ENCODE measurements at regions of chr17 and their contacts with region 1.

Region 1: GRCh38 chr17:42609182-42609813 is at the starts of genes RETREG3 and TUBG1:
- DNase-seq: peak; percentile 99
- ATAC-seq: peak; percentile 94
- H3K4me3 Mint-ChIP-seq: peak within 1 kb of the TSS; percentile 100
- H3K27ac Mint-ChIP-seq: peak within 1 kb of the TSS; percentile 97
- H3K4me1 Mint-ChIP-seq: peaks cover 17% of the 10 kb centered on the region
- H3K27me3 Mint-ChIP-seq: no peaks in the 10 kb centered on the region
- CTCF ChIP-seq: no peak
- total RNA-seq, gene RETREG3: 39.8 to 43.2 TPM (median 40.4 TPM) in 3 replicates
- total RNA-seq, gene TUBG1: 130 to 141 TPM (median 140 TPM) in 3 replicates

Region 2: DNA sequence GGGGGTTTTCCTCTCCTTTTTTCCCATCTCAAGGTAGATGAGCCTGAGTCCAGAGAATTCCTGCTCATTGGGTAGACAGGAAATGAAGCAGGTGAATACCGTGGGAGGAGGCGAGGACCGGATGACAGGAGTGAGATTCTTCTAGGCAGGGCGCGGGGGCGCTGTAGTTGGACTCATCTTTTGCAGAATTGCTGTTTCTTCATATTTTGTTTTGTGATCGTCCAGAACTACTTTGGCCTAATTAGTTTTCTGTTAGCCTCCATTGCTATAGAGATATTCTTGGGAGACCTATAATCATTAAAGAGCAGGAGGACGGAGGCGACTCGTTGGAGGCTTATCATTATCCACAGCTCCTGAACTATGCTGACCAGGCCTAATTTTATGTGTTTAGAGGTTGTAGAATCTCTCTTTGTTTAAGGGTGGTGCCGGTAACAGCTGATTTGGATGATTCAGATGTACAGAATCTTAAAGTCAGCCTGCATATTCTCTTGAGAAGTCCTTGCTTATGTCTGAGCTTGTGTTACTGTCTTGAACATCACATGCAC is 150.0 kb before region 1 on chr17:
- CTCF ChIA-PET with region 1: no interaction called
- POLR2A ChIA-PET with region 1: no interaction called
- DNase-seq: peak; percentile 31
- ATAC-seq: peak; percentile 59
- H3K4me3 Mint-ChIP-seq: peak overlapping the region; percentile 93
- H3K27ac Mint-ChIP-seq: peak overlapping the region; percentile 97
- H3K4me1 Mint-ChIP-seq: peaks cover 34% of the 10 kb centered on the region
- H3K27me3 Mint-ChIP-seq: no peaks in the 10 kb centered on the region; the same call in 1 of the 2 replicates
- CTCF ChIP-seq: no peak

Region 3: DNA sequence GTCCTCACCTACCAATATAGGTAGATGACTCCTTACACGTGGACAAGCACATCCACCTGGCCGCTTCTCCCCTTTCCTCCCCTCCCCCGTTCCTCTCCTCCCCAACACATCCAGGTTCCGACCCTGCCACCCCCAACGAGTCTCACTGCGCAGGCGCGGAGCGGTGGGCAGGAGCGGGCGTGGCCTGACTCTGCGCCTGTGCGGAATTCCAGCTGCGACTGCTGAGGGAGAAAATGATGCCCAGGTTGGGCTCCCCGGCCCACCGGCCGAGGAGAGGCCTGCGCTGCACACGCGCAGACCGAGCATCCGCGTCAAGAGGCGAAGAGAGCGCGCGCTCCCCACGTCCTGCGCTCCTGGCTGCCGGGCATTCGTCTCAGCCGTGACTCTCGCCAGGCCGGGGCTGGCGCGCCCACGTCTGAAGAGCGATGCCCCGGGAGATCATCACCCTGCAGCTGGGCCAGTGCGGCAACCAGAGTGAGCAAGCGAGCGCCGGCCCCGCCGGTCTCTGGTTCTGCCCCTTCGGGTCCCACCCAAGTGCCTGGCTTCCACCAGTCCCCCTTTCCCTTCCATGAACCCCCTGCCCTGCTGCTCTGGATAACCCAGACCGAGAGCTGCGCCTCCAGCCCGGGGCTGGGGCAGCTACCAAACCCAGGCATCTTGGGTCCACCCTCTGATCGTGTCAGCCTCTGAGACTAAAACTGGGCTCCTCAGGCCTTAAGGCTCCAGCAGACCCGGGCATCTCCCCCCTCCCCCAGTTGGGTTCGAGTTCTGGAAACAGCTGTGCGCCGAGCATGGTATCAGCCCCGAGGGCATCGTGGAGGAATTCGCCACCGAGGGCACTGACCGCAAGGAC is 50.0 kb after region 1 on chr17 and contains the start of gene TUBG2:
- CTCF ChIA-PET with region 1: interaction called, 14 read pairs
- POLR2A ChIA-PET with region 1: interaction called, 3 read pairs
- DNase-seq: peak; percentile 96
- ATAC-seq: peak; percentile 88
- H3K4me3 Mint-ChIP-seq: peak within 1 kb of the TSS; percentile 85
- H3K27ac Mint-ChIP-seq: peak within 1 kb of the TSS; percentile 57
- H3K4me1 Mint-ChIP-seq: peaks cover 11% of the 10 kb centered on the region
- H3K27me3 Mint-ChIP-seq: peaks cover 3% of the 10 kb centered on the region
- CTCF ChIP-seq: no peak
- total RNA-seq, gene TUBG2: 22.1 to 26.7 TPM (median 22.2 TPM) in 3 replicates

Region 4: DNA sequence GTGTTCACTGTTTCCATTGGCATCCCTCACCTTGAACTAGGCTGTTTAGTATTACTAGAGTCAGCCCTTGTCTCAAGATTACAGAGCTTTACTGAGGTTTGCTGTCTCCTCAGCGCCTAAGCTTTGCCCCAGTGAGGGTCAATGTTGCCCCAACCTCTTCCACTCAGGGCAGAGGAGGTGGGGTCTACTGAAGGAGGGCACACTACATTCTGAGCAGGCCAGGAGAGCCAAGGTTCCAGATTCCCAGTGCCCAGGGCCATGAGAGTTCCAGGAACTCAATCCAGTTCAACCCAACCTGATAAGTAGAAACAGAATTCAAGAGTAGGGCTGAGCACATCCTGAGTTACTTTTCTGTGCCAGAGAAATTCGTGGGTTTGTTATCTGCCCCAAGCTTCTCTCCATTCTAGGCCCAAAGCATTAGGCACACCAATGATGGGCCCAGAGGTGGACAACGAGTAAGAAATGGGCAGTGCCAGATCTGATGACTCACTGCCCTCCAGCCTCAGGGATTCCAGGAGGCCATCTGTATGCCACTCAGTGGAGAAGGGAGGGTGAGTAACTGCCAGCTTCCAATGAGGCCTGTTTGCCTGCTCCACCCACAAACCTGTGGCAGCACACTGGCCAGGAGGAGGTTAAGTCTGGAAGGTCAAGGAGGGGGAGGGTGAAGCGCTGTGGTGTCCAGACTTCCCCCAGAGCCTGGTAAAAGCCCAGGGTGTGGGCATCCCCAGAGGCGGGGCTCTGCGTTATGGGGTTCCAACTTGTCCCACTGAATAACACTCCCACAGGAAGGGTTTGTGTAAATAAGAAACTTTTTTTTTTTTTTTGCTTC is 58.0 kb after region 1 on chr17:
- CTCF ChIA-PET with region 1: interaction called, 21 read pairs
- POLR2A ChIA-PET with region 1: interaction called, 4 read pairs
- DNase-seq: no peak
- ATAC-seq: no peak
- H3K4me3 Mint-ChIP-seq: no peak overlapping the region
- H3K27ac Mint-ChIP-seq: peak overlapping the region; percentile 53; the same call in 1 of the 2 replicates
- H3K4me1 Mint-ChIP-seq: peaks cover 29% of the 10 kb centered on the region
- H3K27me3 Mint-ChIP-seq: peaks cover 3% of the 10 kb centered on the region
- CTCF ChIP-seq: no peak